Lower leg skin (tissue), 4 donors: ENCODE measurements at regions of chr19 and their contacts with region 1.

Region 1: GRCh38 chr19:8005534-8006256 is at the start of gene ELAVL1:
- DNase-seq: peak; percentile 74 to 97
- H3K4me3 ChIP-seq: peak within 1 kb of the TSS; percentile 62
- CTCF ChIP-seq: no peak
- POLR2A ChIP-seq: no peak
- total RNA-seq, gene ELAVL1: 24.8 to 49.2 (median 30.9) TPM

Region 2: DNA sequence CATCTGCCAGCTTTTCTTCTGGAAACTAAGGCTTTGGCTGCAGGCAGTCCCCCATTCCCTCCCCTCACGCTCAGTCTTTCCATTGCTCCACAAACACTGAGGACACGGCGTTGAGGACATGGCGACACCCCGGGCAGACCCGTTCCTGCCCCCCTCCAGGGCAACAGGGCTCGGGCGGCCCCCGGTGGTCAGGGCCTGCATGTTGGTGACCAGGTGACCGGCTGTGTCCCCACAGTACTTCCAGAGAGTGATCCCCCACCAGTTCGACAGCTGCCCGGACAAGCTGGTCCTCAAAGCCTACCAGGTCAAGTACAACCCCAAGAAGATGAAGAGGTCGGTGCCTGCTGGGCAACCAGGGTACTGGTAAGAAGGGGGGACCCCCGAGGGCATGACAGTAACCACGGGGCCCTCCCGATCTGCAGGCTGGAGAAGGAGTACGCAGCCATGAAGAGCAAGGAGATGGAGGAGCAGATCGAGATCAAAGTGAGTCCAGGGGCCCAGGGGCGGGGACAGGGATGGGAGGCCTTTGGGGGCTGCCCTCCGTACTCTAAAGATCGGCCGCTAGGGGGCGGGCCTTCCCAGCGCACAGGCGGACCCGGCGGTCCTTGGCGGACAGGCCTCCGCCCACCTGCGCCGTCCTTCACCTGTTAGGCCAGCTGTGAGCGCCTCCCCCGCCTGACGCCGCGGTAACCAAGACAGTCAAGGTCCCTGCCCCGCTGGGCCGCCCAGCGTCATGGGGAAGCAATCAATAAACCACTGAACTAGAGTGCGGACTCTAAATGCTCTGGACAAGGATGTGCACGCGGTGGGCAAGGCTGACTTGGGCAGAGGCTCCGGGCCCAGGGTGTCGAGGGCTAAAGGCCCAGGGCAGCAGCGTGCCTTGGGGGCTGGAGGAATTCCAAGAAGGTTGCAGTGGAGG is 152.6 kb before region 1 on chr19:
- intact Hi-C with region 1: loop called (anchors 10 kb)
- DNase-seq: no peak
- H3K4me3 ChIP-seq: no peak overlapping the region
- CTCF ChIP-seq: peak in 1 of 3 donors; percentile 7
- POLR2A ChIP-seq: no peak